ENCODE measurements at regions of chr2 and their contacts with region 1.

Region 1: GRCh38 chr2:231227309-231228162 is 29.1 kb downstream of the ARMC9 start:
- DNase-seq: peak; percentile 53
- H3K4me3 ChIP-seq: no peak overlapping the region
- CTCF ChIP-seq: peak; percentile 88

Region 2: DNA sequence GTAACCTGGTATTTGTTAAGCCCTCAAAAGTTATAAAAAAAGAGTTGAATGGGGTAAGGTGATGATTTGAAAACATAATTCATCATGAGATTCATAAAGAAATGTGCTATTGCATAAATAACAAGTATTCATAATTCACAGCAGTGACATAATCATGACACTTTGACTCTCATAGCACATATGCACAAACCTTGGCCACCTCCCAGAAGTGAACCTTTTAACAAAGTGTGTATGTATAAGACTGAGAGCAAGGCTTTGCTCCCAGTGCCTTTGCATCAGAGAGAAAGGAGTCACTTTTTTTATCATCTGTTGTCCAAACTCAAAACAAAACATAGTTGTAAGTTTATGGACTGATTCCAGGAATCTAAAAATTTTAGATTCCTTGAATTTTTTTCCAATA is 87.7 kb before region 1 on chr2:
- in situ Hi-C with region 1: loop called (anchors 10 kb)
- DNase-seq: no peak
- H3K4me3 ChIP-seq: no peak overlapping the region
- CTCF ChIP-seq: no peak

Region 3: DNA sequence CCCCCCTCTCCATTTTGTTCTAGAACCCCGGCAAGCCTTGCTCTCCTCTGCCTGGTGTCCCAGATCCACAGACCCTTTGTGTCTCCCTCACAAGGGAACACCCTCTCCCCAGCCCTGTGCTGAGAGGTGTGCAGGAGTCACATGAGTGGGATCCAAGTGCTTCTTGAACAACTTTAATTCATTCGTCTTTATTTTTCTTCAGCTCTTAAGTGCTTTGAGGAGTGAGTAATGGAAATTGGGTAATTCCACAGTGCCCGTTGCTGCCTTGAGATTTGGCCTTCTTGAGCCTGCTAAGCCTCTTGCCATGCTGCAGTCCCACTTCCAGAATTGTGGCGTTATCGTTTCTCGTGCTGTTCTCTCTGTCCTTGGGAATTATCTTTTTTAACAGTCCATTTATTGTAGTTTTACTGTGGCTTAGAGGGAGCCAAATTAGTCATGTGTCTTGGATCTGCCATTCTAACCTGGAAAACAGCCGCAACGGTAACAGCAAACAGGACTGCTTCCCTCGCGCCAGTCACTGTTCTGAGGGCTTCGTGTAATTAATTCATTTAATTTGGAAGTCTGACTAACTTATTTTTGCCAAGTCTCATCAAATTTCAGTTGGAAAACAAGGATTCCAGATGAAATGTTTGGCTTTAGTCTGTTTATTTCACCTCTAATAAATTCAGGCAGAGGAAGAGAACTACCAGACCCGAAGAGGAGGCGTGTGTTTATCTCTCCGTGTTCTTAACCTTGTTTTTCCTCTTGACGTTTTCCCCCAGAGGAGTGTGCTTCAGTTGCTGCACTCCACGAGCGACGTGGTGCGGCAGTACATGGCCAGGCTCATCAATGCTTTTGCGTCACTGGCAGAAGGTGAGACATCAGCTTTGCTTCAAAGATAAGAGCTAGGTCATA is 42.9 kb after region 1 on chr2:
- in situ Hi-C with region 1: loop called (anchors 5 kb)
- DNase-seq: no peak
- H3K4me3 ChIP-seq: no peak overlapping the region
- CTCF ChIP-seq: no peak